Endothelial cell of umbilical vein (primary cell): ENCODE measurements at regions of chr6 and their contacts with region 1.

Region 1: DNA sequence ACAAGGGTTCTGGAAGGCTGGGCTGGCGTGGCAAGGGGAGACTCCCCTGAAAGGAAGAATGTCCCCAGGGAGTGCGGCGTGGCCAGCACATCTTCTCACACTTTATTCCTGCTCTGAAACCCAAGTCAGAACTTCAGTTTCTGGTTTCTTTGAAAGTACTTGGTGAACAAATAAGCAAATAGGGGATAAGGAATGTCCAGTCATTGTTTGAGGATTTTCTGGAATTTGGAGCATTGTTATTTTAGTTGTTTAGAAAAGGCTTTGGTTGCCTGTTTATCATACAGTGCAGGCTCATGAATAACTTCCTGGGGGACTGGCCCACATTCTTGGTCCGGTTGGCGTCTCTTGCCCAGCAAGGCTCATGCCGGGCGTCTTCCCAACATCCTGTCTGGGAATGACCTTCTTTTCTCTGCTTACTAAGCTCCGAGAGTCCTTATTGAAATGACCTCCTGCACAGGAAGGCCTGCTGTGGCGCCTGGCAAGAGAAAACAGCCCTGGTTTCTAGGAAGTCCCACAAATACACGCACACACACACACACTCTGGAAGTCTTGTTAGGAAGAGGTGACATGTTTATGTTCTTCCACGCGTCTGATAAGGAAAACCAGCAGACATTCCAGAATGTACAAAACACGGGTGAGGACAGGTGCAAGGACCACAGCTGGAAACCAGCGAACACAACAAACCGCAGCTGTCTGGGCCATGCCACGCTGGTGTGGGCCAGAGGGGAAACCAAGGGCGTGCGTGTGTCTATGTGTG is 71.9 kb downstream of the TMEM170B start:
- DNase-seq: peak; percentile 99
- H3K4me3 ChIP-seq: peak overlapping the region in 2 of 3 experiments; percentile 30 to 86
- H3K27ac ChIP-seq: peak overlapping the region; percentile 99
- H3K4me1 ChIP-seq: peaks cover 78% of the 10 kb centered on the region
- H3K27me3 ChIP-seq: no peaks in the 10 kb centered on the region
- CTCF ChIP-seq: no peak
- POLR2A ChIP-seq: no peak

Region 2: GRCh38 chr6:10073341-10073740 is 1536.2 kb before region 1 on chr6:
- CTCF ChIA-PET with region 1: no interaction called
- POLR2A ChIA-PET with region 1: no interaction called
- dilution Hi-C with region 1: no loop called
- intact Hi-C with region 1: no loop called
- DNase-seq: no peak
- H3K4me3 ChIP-seq: no peak overlapping the region
- H3K27ac ChIP-seq: no peak overlapping the region
- H3K4me1 ChIP-seq: no peaks in the 10 kb centered on the region
- H3K27me3 ChIP-seq: no peaks in the 10 kb centered on the region
- CTCF ChIP-seq: no peak
- POLR2A ChIP-seq: no peak

Region 3: GRCh38 chr6:11207199-11207968 is 402.1 kb before region 1 on chr6:
- CTCF ChIA-PET with region 1: no interaction called
- POLR2A ChIA-PET with region 1: no interaction called
- dilution Hi-C with region 1: no loop called
- intact Hi-C with region 1: loop called (anchors 1 kb)
- DNase-seq: peak; percentile 96
- H3K4me3 ChIP-seq: no peak overlapping the region
- H3K27ac ChIP-seq: peak overlapping the region; percentile 95
- H3K4me1 ChIP-seq: peaks cover 69% of the 10 kb centered on the region
- H3K27me3 ChIP-seq: no peaks in the 10 kb centered on the region
- CTCF ChIP-seq: no peak
- POLR2A ChIP-seq: peak; percentile 43

Region 4: GRCh38 chr6:11552442-11552841 is 57.1 kb before region 1 on chr6:
- CTCF ChIA-PET with region 1: no interaction called
- POLR2A ChIA-PET with region 1: no interaction called
- dilution Hi-C with region 1: no loop called
- intact Hi-C with region 1: no loop called
- DNase-seq: no peak
- H3K4me3 ChIP-seq: no peak overlapping the region
- H3K27ac ChIP-seq: no peak overlapping the region
- H3K4me1 ChIP-seq: no peaks in the 10 kb centered on the region
- H3K27me3 ChIP-seq: no peaks in the 10 kb centered on the region
- CTCF ChIP-seq: no peak
- POLR2A ChIP-seq: no peak

Region 5: GRCh38 chr6:11585426-11586016 is 24.0 kb before region 1 on chr6:
- CTCF ChIA-PET with region 1: interaction called, 16 read pairs
- POLR2A ChIA-PET with region 1: interaction called, 12 read pairs
- dilution Hi-C with region 1: no loop called
- intact Hi-C with region 1: loop called (anchors 1 kb)
- DNase-seq: peak; percentile 83
- H3K4me3 ChIP-seq: no peak overlapping the region
- H3K27ac ChIP-seq: peak overlapping the region; percentile 79
- H3K4me1 ChIP-seq: peaks cover 29% of the 10 kb centered on the region
- H3K27me3 ChIP-seq: no peaks in the 10 kb centered on the region
- CTCF ChIP-seq: peak; percentile 41 to 42
- POLR2A ChIP-seq: no peak

Region 6: GRCh38 chr6:11595903-11596302 is 13.6 kb before region 1 on chr6:
- CTCF ChIA-PET with region 1: interaction called, 26 read pairs
- POLR2A ChIA-PET with region 1: interaction called, 3 read pairs
- dilution Hi-C with region 1: no loop called
- intact Hi-C with region 1: no loop called
- DNase-seq: peak; percentile 19
- H3K4me3 ChIP-seq: no peak overlapping the region
- H3K27ac ChIP-seq: no peak overlapping the region
- H3K4me1 ChIP-seq: no peaks in the 10 kb centered on the region
- H3K27me3 ChIP-seq: no peaks in the 10 kb centered on the region
- CTCF ChIP-seq: peak in 1 of 2 donors; percentile 13
- POLR2A ChIP-seq: no peak

Region 7: GRCh38 chr6:11770546-11771466 is 161.3 kb after region 1 on chr6:
- CTCF ChIA-PET with region 1: no interaction called
- POLR2A ChIA-PET with region 1: interaction called, 3 read pairs
- dilution Hi-C with region 1: loop called (anchors 5 kb)
- intact Hi-C with region 1: loop called (anchors 1 kb)
- DNase-seq: peak; percentile 93
- H3K4me3 ChIP-seq: no peak overlapping the region
- H3K27ac ChIP-seq: peak overlapping the region; percentile 94
- H3K4me1 ChIP-seq: peaks cover 58% of the 10 kb centered on the region
- H3K27me3 ChIP-seq: no peaks in the 10 kb centered on the region
- CTCF ChIP-seq: no peak
- POLR2A ChIP-seq: peak; percentile 84

Region 8: DNA sequence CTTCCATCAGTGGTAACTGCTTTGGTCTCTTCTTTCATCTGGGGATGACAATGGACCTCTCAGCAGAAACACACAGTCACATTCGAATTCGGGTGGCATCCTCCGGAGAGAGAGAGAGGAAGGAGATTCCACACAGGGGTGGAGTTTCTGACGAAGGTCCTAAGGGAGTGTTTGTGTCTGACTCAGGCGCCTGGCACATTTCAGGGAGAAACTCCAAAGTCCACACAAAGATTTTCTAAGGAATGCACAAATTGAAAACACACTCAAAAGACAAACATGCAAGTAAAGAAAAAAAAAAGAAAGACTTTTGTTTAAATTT is 686.7 kb after region 1 on chr6:
- CTCF ChIA-PET with region 1: interaction called, 38 read pairs
- POLR2A ChIA-PET with region 1: interaction called, 111 read pairs
- dilution Hi-C with region 1: loop called (anchors 25 kb)
- intact Hi-C with region 1: no loop called
- DNase-seq: peak; percentile 53
- H3K4me3 ChIP-seq: peak overlapping the region in 2 of 3 experiments; percentile 91 to 96
- H3K27ac ChIP-seq: peak overlapping the region; percentile 98
- H3K4me1 ChIP-seq: peaks cover 30% of the 10 kb centered on the region
- H3K27me3 ChIP-seq: no peaks in the 10 kb centered on the region
- CTCF ChIP-seq: no peak
- POLR2A ChIP-seq: no peak

Region 9: DNA sequence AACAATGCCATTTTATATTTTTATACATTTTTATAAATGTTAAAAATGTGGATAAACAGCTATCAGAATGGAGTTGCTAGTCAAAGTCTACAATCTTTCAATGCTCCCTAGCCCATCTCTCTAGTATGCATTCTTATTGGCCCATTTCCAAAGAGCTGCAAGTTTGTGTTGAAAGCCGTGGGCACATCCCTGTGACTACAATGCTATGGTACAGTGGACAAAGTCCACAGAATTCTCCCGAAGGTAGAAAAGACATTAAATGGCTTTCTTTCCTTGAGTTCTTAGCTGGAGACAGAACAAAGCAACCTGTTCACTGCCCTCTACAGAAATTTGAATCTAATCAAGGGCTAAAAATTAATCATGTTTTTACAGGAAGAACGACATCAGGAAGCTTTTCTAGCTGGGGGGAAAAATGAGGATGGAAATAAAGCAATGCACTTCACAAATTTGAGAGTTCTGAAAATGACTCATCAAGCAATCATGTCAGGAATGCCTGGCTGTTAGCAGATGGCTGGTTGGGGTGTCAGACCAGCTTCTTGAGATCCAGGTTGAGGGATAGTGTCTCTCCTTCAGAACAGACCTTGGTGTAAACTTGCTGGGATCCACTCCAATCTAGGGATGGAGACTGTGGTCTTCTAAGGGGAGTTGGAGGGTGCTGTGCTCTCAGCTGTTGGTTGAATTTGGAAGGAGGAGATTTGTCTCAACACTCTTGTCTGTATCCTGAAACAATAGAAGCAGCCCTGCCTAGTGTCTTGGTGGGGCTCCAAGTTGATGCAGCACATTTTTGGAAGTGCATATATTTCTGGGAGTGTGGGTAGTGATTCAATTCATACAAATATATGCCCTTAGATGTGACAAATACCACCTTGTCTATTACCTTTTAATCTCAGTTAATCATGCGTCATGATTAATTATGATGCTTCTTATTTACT is 963.7 kb after region 1 on chr6:
- CTCF ChIA-PET with region 1: no interaction called
- POLR2A ChIA-PET with region 1: interaction called, 5 read pairs
- dilution Hi-C with region 1: no loop called
- intact Hi-C with region 1: loop called (anchors 1 kb)
- DNase-seq: peak; percentile 92
- H3K4me3 ChIP-seq: peak overlapping the region in 1 of 3 experiments; percentile 13
- H3K27ac ChIP-seq: peak overlapping the region; percentile 92
- H3K4me1 ChIP-seq: peaks cover 75% of the 10 kb centered on the region
- H3K27me3 ChIP-seq: no peaks in the 10 kb centered on the region
- CTCF ChIP-seq: no peak
- POLR2A ChIP-seq: no peak